MCF 10A (cell line): ENCODE measurements at regions of chr9 and their contacts with region 1.

Region 1: DNA sequence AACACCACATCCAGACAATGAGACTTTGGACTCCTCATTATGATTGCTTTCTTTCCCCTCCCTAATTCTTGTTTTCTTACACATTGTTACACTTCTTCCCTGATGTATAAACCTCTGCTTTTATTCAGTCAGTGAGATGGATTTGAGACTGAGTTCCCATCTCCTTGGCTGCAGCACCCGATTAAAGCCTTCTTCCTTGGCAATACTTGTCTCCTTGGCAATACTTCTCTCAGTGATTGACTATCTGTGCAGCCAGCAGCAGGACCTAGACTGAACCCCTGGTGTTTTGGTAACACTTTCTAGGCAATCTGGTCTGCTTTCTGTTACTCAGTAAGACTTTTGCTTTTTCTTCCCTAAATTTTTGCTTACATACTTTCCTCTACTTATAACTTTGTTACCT is 492.8 kb upstream of the SMC2 start:
- DNase-seq: no peak
- H3K4me3 Mint-ChIP-seq: no peak overlapping the region
- H3K27ac Mint-ChIP-seq: no peak overlapping the region
- H3K4me1 Mint-ChIP-seq: no peaks in the 10 kb centered on the region
- H3K27me3 Mint-ChIP-seq: no peaks in the 10 kb centered on the region
- CTCF ChIP-seq: no peak

Region 2: DNA sequence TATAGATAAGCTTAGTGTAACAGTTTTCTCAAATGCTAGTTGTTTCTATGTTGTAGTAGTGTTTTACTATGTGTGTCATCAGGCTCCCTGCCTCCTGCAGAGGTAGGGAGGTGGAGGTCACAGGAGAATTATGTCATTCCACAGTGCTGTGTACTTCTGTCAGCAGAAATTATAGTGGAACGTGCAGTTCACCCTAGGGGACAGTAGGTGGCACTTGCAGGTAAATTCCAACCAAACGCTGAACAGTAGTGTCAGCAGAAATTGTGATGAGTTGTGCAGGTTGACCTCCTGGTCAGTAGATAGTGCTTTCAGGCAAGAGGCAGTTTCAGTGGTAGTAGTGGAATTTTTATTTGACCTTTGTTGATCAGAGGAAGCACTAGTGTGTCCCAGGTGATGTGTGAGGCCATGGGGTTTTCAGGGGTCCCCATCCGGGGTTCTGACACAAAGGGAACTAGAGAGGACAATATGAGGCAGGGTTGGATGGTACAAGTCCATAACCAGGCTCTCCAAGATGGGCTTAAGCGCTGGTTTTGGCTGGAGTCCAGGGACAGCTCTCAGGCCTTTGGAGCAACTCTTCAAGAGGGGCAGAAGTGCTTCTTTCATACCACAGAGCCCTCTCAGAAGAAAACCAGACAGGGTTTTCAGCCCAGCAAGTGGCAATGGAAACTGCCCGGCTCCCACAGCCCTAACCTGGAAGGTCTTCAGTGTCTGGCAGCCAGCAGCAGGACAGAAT is 203.3 kb before region 1 on chr9:
- CTCF ChIA-PET with region 1: no interaction called
- POLR2A ChIA-PET with region 1: no interaction called
- intact Hi-C with region 1: loop called (anchors 10 kb)
- DNase-seq: peak; percentile 65
- H3K4me3 Mint-ChIP-seq: no peak overlapping the region
- H3K27ac Mint-ChIP-seq: no peak overlapping the region
- H3K4me1 Mint-ChIP-seq: peaks cover 6% of the 10 kb centered on the region
- H3K27me3 Mint-ChIP-seq: no peaks in the 10 kb centered on the region
- CTCF ChIP-seq: peak; percentile 76

Region 3: GRCh38 chr9:103625161-103625804 is 24.0 kb after region 1 on chr9:
- CTCF ChIA-PET with region 1: no interaction called
- POLR2A ChIA-PET with region 1: no interaction called
- intact Hi-C with region 1: no loop called
- DNase-seq: no peak
- H3K4me3 Mint-ChIP-seq: no peak overlapping the region
- H3K27ac Mint-ChIP-seq: no peak overlapping the region
- H3K4me1 Mint-ChIP-seq: peaks cover 7% of the 10 kb centered on the region
- H3K27me3 Mint-ChIP-seq: no peaks in the 10 kb centered on the region
- CTCF ChIP-seq: no peak